Thyroid gland (tissue), 4 donors: ENCODE measurements at regions of chr1 and their contacts with region 1.

Region 1: DNA sequence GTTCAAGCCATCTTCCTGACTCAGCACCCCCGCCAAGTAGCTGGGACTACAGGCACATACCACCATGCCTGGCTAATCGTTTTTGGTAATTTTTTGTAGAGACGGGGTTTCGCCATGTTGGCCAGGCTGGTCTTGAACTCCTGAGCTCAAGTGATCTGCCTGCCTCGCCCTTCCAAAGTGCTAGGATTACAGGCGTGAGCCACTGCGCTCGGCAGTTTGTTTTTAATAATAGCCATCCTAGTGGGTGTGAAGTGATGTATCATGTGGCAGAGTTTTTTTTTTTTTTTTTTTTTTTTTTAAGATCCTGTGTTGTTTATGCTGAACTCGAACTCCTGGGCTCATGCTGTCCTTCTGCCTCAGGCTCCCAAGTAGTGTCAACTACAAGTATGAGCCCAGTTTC is 51.8 kb downstream of the SPEN start:
- DNase-seq: no peak
- H3K4me3 ChIP-seq: no peak overlapping the region
- H3K27ac ChIP-seq: peak overlapping the region in 1 of 3 donors; percentile 79
- H3K4me1 ChIP-seq: peaks cover 19 to 34% of the 10 kb centered on the region in 2 donors
- H3K27me3 ChIP-seq: no peaks in the 10 kb centered on the region
- CTCF ChIP-seq: no peak
- POLR2A ChIP-seq: no peak

Region 2: DNA sequence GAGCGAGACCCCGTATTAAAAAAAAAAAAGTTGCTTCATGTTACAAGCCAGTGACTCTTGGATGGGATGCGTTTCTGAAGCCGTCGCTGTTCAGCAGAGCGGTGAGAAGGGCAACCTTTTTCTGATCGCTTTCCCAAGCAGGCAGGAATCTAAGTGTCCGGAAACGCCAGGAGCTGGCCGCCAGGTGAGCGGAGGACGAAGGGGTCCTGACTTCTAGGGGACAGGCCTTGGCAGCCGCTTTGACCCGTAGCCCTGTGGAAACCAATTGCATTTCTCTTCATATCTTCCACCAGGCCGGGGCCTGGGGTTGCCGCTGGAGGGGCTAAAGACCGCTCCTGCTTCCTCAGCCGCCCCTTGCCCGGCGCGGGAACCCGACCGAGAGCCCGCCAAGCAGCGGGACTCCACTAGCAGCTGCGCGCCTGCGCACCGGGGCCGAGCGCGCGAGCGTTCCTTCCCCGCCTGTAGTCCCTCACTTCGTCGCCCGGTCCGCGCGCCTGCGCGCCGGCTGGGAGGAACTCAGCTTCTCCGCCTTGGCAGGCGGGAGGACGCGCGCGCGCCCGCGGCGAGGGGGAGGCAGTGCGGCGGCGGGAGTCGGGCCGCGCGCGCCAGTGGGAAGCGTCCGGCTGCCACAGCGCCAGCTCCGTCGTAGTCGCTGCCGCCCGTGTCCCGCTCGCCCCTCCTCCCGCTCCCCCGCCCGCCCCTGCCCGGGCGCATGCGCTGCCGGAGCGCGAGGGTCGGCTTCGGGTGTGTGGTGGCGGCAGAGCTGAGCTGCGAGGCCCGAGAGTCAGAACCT is 52.0 kb before region 1 on chr1 and contains the start of gene SPEN:
- intact Hi-C with region 1: loop called (anchors 10 kb)
- DNase-seq: peak; percentile 97 to 98
- H3K4me3 ChIP-seq: peak within 1 kb of the TSS; percentile 42 to 68 (median 67)
- H3K27ac ChIP-seq: peak within 1 kb of the TSS; percentile 90 to 97 (median 97)
- H3K4me1 ChIP-seq: peaks cover 41 to 44% of the 10 kb centered on the region in 2 donors
- H3K27me3 ChIP-seq: no peaks in the 10 kb centered on the region
- CTCF ChIP-seq: peak in 4 of 6 experiments; percentile 13 to 46 (median 28)
- POLR2A ChIP-seq: peak in 1 of 2 donors; percentile 84
- total RNA-seq, gene SPEN: 40.7 to 97.0 (median 57.3) TPM